B cell (primary cell): ENCODE measurements at regions of chr5 and their contacts with region 1.

Region 1: DNA sequence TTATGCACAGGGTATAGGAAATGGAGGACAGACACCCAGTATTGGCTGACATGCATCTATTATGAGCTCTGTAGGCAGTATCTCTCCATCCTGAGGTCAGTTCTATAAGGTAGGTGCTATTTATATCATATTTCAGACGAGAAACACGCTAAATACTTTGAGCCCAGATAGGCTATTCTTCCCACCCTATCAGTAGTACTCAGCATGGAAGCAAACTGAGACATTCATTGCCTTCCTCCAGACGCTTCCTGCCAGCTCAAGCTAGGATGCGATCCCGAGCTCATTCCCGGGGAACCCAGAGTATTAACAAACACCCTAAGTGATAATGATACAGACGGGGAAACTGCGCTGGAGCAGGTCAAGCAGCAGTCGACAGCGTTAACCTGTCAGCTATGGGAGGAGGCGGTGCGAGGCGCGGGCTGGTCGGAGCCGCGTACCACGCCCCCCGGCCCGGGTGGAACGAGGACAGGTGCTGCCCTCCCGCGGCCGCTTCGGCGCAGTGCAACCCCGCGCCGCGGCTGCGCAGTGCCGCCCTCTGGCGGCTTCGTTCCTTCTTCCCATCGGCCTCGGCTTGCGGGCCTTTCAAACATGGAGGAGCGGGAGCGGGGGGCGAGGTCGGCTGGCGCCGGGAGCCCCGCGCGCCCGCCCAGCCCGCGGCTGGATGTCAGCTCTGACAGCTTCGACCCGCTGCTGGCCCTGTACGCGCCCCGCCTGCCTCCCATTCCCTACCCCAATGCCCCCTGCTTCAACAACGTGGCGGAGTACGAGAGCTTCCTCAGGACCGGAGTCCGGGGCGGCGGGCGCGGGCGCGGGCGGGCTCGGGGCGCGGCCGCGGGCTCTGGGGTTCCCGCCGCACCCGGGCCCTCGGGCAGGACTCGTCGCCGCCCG is at the start of gene LSM11:
- DNase-seq: peak; percentile 95
- ATAC-seq: peak; percentile 96
- H3K4me3 ChIP-seq: peak within 1 kb of the TSS; percentile 42 to 81 (median 70)
- H3K4me3 Mint-ChIP-seq: peak within 1 kb of the TSS; percentile 94
- H3K27ac ChIP-seq: peak within 1 kb of the TSS in 1 of 2 donors; percentile 29
- H3K27ac Mint-ChIP-seq: peak within 1 kb of the TSS; percentile 87
- H3K4me1 ChIP-seq: peaks cover 12 to 13% of the 10 kb centered on the region in 2 donors
- H3K4me1 Mint-ChIP-seq: peaks cover 24% of the 10 kb centered on the region
- H3K27me3 ChIP-seq: no peaks in the 10 kb centered on the region
- H3K27me3 Mint-ChIP-seq: no peaks in the 10 kb centered on the region
- CTCF ChIP-seq: peak; percentile 99
- total RNA-seq, gene LSM11: 4.2 and 4.3 TPM in 2 replicates

Region 2: DNA sequence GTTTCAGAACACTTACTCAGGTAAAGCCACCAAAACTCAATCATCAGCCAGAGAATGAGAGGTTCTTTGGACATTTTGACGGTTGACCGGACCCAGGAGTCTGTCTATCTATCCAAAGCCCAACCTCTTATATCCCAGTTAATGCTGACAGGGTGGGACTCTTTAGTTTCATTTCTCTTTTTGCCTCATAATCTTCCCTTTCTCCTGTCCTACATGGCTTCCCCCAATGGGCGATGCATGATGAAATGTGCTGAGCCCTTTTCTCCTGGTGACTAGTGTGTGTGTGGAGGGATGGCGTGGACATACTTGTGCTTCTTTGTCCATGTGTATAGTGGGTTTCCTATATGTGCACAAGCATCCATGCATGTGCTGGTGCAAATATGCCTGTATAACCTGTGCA is 780.3 kb before region 1 on chr5 and contains the start of gene TIMD4:
- CTCF ChIA-PET with region 1: no interaction called
- POLR2A ChIA-PET with region 1: no interaction called
- intact Hi-C with region 1: no loop called
- DNase-seq: no peak
- ATAC-seq: no peak
- H3K4me3 ChIP-seq: no peak within 1 kb of the TSS
- H3K4me3 Mint-ChIP-seq: no peak within 1 kb of the TSS
- H3K27ac ChIP-seq: no peak within 1 kb of the TSS
- H3K27ac Mint-ChIP-seq: no peak within 1 kb of the TSS
- H3K4me1 ChIP-seq: peaks cover 0 to 6% of the 10 kb centered on the region in 2 donors
- H3K4me1 Mint-ChIP-seq: peaks cover 6% of the 10 kb centered on the region
- H3K27me3 ChIP-seq: peaks cover 0 to 3% (median 0%) of the 10 kb centered on the region in 4 experiments
- H3K27me3 Mint-ChIP-seq: peaks cover 4% of the 10 kb centered on the region
- CTCF ChIP-seq: no peak
- total RNA-seq, gene TIMD4: not detected in 2 replicates

Region 3: GRCh38 chr5:157328277-157328912 is 415.0 kb before region 1 on chr5:
- CTCF ChIA-PET with region 1: interaction called, 47 read pairs
- POLR2A ChIA-PET with region 1: no interaction called
- intact Hi-C with region 1: loop called (anchors 1 kb)
- DNase-seq: peak; percentile 78
- ATAC-seq: peak; percentile 98
- H3K4me3 ChIP-seq: no peak overlapping the region
- H3K4me3 Mint-ChIP-seq: no peak overlapping the region
- H3K27ac ChIP-seq: no peak overlapping the region
- H3K27ac Mint-ChIP-seq: no peak overlapping the region
- H3K4me1 ChIP-seq: no peaks in the 10 kb centered on the region
- H3K4me1 Mint-ChIP-seq: peaks cover 6% of the 10 kb centered on the region
- H3K27me3 ChIP-seq: no peaks in the 10 kb centered on the region
- H3K27me3 Mint-ChIP-seq: no peaks in the 10 kb centered on the region
- CTCF ChIP-seq: peak; percentile 96

Region 4: GRCh38 chr5:157431544-157432200 is 311.7 kb before region 1 on chr5:
- CTCF ChIA-PET with region 1: interaction called, 93 read pairs
- POLR2A ChIA-PET with region 1: interaction called, 8 read pairs
- intact Hi-C with region 1: loop called (anchors 1 kb)
- DNase-seq: peak; percentile 84
- ATAC-seq: peak; percentile 100
- H3K4me3 ChIP-seq: peak overlapping the region in 1 of 5 experiments; percentile 30
- H3K4me3 Mint-ChIP-seq: peak overlapping the region; percentile 40
- H3K27ac ChIP-seq: peak overlapping the region; percentile 28 to 67
- H3K27ac Mint-ChIP-seq: peak overlapping the region; percentile 88
- H3K4me1 ChIP-seq: peaks cover 8 to 11% of the 10 kb centered on the region in 2 donors
- H3K4me1 Mint-ChIP-seq: peaks cover 18% of the 10 kb centered on the region
- H3K27me3 ChIP-seq: no peaks in the 10 kb centered on the region
- H3K27me3 Mint-ChIP-seq: no peaks in the 10 kb centered on the region
- CTCF ChIP-seq: peak; percentile 76

Region 5: GRCh38 chr5:157456301-157456700 is 287.1 kb before region 1 on chr5:
- CTCF ChIA-PET with region 1: interaction called, 11 read pairs
- POLR2A ChIA-PET with region 1: no interaction called
- intact Hi-C with region 1: no loop called
- DNase-seq: no peak
- ATAC-seq: no peak
- H3K4me3 ChIP-seq: no peak overlapping the region
- H3K4me3 Mint-ChIP-seq: no peak overlapping the region
- H3K27ac ChIP-seq: no peak overlapping the region
- H3K27ac Mint-ChIP-seq: no peak overlapping the region
- H3K4me1 ChIP-seq: peaks cover 48 to 52% of the 10 kb centered on the region in 2 donors
- H3K4me1 Mint-ChIP-seq: peaks cover 54% of the 10 kb centered on the region
- H3K27me3 ChIP-seq: no peaks in the 10 kb centered on the region
- H3K27me3 Mint-ChIP-seq: no peaks in the 10 kb centered on the region
- CTCF ChIP-seq: no peak

Region 6: GRCh38 chr5:157567032-157567431 is 176.4 kb before region 1 on chr5:
- CTCF ChIA-PET with region 1: interaction called, 10 read pairs
- POLR2A ChIA-PET with region 1: no interaction called
- intact Hi-C with region 1: no loop called
- DNase-seq: peak; percentile 50
- ATAC-seq: no peak
- H3K4me3 ChIP-seq: peak overlapping the region in 2 of 5 experiments; percentile 15 to 29
- H3K4me3 Mint-ChIP-seq: peak overlapping the region; percentile 79
- H3K27ac ChIP-seq: peak overlapping the region; percentile 43 to 64
- H3K27ac Mint-ChIP-seq: peak overlapping the region; percentile 85
- H3K4me1 ChIP-seq: peaks cover 84 to 91% of the 10 kb centered on the region in 2 donors
- H3K4me1 Mint-ChIP-seq: peaks cover 83% of the 10 kb centered on the region
- H3K27me3 ChIP-seq: no peaks in the 10 kb centered on the region
- H3K27me3 Mint-ChIP-seq: no peaks in the 10 kb centered on the region
- CTCF ChIP-seq: no peak

Region 7: DNA sequence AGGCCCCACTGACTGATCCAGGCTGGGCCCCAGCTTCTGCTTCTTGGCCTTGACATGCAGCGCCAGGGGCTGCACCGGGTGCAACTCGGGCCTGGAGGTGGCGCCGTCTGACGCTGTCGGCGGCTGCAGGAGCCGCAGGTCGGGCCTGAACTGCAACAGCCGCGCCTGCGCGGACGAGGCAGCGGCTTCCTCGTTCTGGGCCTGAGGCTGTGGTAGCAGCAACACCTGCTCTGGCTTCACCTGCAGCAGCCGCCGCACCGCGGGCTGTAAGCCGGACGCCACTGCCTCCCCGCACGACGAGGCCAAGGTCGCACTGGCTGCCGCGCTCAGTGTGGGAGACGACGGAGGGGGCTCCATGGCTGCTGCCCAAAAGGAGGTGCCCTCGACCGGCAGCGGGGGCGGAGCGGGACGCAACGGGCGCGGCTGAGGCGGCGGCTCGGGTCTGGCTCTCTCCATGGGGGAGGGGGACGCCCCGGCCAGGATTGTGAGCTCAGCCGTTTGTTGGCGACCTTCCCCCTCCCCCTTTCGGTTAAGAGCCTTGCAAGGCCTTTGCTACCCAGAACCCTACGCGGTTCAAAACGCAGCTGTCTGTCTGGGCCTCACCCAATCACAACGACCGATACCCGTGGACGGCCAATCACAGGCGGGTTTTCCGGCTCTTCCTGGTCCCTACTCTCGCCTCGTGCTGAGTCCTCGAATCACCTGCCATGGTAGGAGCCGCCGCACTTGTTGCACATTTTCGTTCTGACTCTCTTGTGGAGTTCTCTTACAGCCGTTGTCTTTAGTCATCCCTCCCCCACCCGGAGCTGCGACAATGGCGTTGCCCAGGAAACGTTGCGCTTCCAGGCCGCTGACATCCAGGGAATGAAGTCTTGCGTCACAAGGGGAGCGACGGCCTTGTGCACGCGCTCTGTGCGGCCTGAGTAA is 91.5 kb before region 1 on chr5 and contains the start of gene SOX30:
- CTCF ChIA-PET with region 1: interaction called, 9 read pairs
- POLR2A ChIA-PET with region 1: interaction called, 3 read pairs
- intact Hi-C with region 1: loop called (anchors 1 kb)
- DNase-seq: peak; percentile 92
- ATAC-seq: peak; percentile 97
- H3K4me3 ChIP-seq: peak within 1 kb of the TSS in 4 of 5 experiments; percentile 46 to 60 (median 58)
- H3K4me3 Mint-ChIP-seq: peak within 1 kb of the TSS; percentile 89
- H3K27ac ChIP-seq: peak within 1 kb of the TSS; percentile 67 to 77
- H3K27ac Mint-ChIP-seq: peak within 1 kb of the TSS; percentile 90
- H3K4me1 ChIP-seq: peaks cover 34 to 36% of the 10 kb centered on the region in 2 donors
- H3K4me1 Mint-ChIP-seq: peaks cover 42% of the 10 kb centered on the region
- H3K27me3 ChIP-seq: no peaks in the 10 kb centered on the region
- H3K27me3 Mint-ChIP-seq: no peaks in the 10 kb centered on the region
- CTCF ChIP-seq: peak; percentile 59
- total RNA-seq, gene SOX30: 0.29 and 0.49 TPM in 2 replicates

Region 8: GRCh38 chr5:157718519-157718918 is 24.9 kb before region 1 on chr5:
- CTCF ChIA-PET with region 1: interaction called, 40 read pairs
- POLR2A ChIA-PET with region 1: interaction called, 3 read pairs
- intact Hi-C with region 1: loop called (anchors 1 kb)
- DNase-seq: peak; percentile 74
- ATAC-seq: peak; percentile 95
- H3K4me3 ChIP-seq: no peak overlapping the region
- H3K4me3 Mint-ChIP-seq: peak overlapping the region; percentile 18
- H3K27ac ChIP-seq: peak overlapping the region in 1 of 2 donors; percentile 30
- H3K27ac Mint-ChIP-seq: peak overlapping the region; percentile 42
- H3K4me1 ChIP-seq: peaks cover 19 to 20% of the 10 kb centered on the region in 2 donors
- H3K4me1 Mint-ChIP-seq: peaks cover 15% of the 10 kb centered on the region
- H3K27me3 ChIP-seq: no peaks in the 10 kb centered on the region
- H3K27me3 Mint-ChIP-seq: no peaks in the 10 kb centered on the region
- CTCF ChIP-seq: peak; percentile 80